WTC11 (cell line): ENCODE measurements at regions of chr19 and their contacts with region 1.

Region 1: DNA sequence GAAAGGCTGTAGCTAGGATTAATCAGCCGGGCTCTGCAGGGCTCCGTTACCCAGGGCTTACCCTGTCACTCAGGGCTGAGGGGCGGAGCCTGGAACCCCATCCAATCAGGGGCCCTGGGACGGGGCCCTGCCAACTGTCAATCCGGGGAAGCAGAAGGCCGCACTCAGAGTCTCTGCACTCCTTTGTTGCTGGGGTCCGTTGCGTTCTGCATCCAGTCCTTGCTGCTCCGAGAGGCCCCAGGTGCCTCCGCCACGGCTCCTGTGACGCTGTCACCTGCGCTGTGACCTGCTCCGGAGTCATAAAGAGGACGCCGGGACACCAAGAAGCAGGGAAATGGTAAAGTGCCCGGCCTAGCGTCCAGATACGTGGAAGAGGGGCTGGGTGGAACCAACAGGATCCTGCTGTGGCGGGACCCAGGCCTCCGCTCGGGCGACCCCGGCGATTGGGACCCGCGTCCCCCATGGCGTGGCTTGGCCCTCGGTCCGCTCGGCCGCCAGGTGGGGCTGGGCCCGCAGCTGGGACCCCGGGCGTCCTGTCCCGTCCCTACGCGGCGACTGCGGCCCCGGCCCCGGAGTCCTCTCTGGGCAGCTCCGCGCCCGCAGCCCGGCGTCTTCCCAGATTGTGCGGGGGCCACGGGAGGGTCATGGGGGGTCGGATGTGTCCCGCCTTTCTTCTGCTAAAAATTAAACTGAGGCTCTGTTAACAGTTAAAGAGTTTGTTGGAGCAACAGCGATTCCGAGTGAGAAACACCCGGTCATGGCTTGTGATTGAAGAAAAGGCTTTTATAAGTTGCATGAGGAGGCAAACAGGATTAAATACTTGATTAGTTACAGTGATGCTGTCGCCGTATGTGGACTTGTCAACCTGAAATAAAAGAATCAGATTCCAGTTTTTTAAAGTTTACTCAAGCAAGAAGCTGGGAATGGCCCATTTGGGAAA is at the start of gene ZNF491:
- DNase-seq: peak; percentile 97
- ATAC-seq: peak; percentile 98
- H3K4me3 Mint-ChIP-seq: peak within 1 kb of the TSS; percentile 84
- H3K27ac Mint-ChIP-seq: peak within 1 kb of the TSS; percentile 88
- H3K4me1 Mint-ChIP-seq: peaks cover 18% of the 10 kb centered on the region
- H3K27me3 Mint-ChIP-seq: peaks cover 46% of the 10 kb centered on the region
- CTCF ChIP-seq: no peak
- total RNA-seq, gene ZNF491: 1.1 to 2.1 TPM (median 1.3 TPM) in 3 replicates

Region 2: DNA sequence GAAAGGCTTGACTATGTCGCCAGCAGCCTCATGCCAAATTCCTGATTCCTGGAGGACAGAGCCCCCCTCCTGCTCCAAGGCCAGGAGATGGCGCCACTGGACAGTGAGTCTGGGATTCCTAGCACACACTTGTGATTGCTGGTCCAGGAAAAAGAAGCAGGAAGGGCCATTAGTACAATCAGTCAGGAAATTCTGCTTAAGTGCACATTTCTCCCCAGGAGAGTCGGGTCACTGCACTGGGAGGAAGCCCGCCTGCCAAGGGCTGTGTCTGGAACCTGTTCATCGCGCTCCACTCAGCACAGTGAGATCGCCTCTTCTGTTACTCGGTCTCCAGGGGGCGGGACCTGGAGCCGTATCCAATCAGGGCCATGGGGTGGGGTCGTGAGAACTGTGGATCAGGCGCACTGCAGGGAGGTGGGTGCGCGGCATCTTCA is 125.0 kb before region 1 on chr19:
- CTCF ChIA-PET with region 1: interaction called, 13 read pairs
- POLR2A ChIA-PET with region 1: no interaction called
- DNase-seq: peak; percentile 84
- ATAC-seq: peak; percentile 97
- H3K4me3 Mint-ChIP-seq: peak overlapping the region; percentile 88
- H3K27ac Mint-ChIP-seq: peak overlapping the region; percentile 71; the same call in 1 of the 2 replicates
- H3K4me1 Mint-ChIP-seq: peaks cover 4% of the 10 kb centered on the region; the same call in 1 of the 2 replicates
- H3K27me3 Mint-ChIP-seq: peaks cover 19% of the 10 kb centered on the region
- CTCF ChIP-seq: peak; percentile 46; the same call in 1 of the 2 replicates

Region 3: DNA sequence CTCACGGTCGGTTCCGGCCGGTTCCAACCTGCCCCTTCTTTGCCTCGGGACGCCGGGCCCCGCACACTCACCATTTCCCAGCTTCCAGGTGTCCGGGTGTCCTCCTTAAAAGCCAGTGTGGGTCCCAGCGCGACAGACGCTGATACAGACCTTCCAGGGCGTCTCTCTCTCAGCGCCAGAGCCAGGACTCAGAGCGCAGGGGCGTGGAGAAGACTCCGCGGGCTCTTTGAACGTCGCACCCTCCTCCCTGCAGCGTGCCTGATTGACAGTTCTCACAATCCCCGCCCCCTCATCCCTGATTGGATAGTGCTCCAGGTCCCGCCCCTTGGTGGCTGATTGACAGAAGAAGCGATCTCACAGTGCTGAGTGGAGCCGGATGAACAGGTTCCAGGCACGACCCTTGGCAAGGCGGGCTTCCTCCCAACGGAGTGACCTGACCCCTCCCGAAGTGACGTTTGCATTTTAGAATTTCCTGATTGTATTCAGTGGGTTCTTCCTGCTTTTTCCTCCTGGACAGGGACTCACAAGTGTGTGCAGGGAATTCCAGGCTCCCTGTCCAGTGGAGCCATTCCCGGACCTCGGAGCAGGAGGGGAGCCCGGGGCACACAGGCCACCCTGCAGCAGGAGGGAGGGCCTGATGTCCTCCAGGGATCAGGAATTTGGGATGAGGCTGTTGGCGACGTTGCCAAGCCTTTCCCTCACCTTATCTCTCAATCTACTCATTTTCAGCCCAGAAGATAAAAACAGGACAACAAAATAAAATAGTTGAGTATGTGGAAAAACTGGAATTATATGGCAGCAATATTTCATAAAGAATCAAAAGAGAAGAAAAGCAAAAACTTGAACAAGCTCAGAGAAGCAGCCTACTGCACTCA is 59.7 kb before region 1 on chr19 and contains the start of gene ZNF823:
- CTCF ChIA-PET with region 1: interaction called, 10 read pairs
- POLR2A ChIA-PET with region 1: no interaction called
- DNase-seq: peak; percentile 99
- ATAC-seq: peak; percentile 96
- H3K4me3 Mint-ChIP-seq: peak within 1 kb of the TSS; percentile 98
- H3K27ac Mint-ChIP-seq: peak within 1 kb of the TSS; percentile 96
- H3K4me1 Mint-ChIP-seq: peaks cover 10% of the 10 kb centered on the region
- H3K27me3 Mint-ChIP-seq: peaks cover 42% of the 10 kb centered on the region
- CTCF ChIP-seq: no peak
- total RNA-seq, gene ZNF823: 4.4 to 5.4 TPM (median 4.6 TPM) in 3 replicates

Region 4: GRCh38 chr19:11814029-11814699 is 15.5 kb after region 1 on chr19 and contains the start of gene ZNF440:
- CTCF ChIA-PET with region 1: interaction called, 100 read pairs
- POLR2A ChIA-PET with region 1: interaction called, 3 read pairs
- DNase-seq: peak; percentile 98
- ATAC-seq: peak; percentile 98
- H3K4me3 Mint-ChIP-seq: peak within 1 kb of the TSS; percentile 90
- H3K27ac Mint-ChIP-seq: peak within 1 kb of the TSS; percentile 72
- H3K4me1 Mint-ChIP-seq: peaks cover 18% of the 10 kb centered on the region
- H3K27me3 Mint-ChIP-seq: peaks cover 53% of the 10 kb centered on the region
- CTCF ChIP-seq: no peak
- total RNA-seq, gene ZNF440: 10.9 to 16.4 TPM (median 12.7 TPM) in 3 replicates

Region 5: DNA sequence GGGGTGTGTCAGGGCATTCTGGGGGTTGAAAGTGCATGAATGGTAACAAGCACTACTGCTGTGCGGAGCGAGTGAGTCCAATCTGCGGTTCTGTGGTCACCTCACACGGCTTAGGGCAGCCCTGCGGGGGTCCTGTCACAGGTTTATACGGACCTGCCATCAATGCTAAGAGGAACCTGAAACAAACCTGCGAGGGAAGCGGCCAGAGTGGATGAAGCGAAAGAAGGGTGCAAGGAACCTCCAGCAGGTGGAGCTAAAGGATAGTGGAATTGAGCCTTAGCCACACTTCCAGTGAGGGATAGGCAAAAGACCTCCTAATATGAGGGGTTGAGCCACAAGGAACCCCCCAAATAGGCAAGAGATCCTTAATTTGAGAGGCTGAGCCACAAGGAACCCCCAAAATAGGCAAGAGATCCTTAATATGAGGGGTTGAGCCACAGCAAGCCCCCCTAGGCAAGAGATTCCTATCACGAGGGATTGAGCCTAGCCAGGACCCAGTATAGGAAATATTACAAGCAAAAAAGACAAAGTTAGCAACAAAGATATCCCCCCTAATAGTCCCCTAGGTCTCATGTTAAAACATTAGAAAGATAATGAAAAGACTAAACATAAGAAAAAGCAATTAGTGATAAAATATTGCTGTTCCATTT is 82.6 kb after region 1 on chr19:
- CTCF ChIA-PET with region 1: interaction called, 38 read pairs
- POLR2A ChIA-PET with region 1: interaction called, 6 read pairs
- DNase-seq: peak; percentile 76
- ATAC-seq: peak; percentile 74
- H3K4me3 Mint-ChIP-seq: peak overlapping the region; percentile 13
- H3K27ac Mint-ChIP-seq: no peak overlapping the region
- H3K4me1 Mint-ChIP-seq: peaks cover 1% of the 10 kb centered on the region; the same call in 1 of the 2 replicates
- H3K27me3 Mint-ChIP-seq: peaks cover 8% of the 10 kb centered on the region
- CTCF ChIP-seq: peak; percentile 51

Region 6: DNA sequence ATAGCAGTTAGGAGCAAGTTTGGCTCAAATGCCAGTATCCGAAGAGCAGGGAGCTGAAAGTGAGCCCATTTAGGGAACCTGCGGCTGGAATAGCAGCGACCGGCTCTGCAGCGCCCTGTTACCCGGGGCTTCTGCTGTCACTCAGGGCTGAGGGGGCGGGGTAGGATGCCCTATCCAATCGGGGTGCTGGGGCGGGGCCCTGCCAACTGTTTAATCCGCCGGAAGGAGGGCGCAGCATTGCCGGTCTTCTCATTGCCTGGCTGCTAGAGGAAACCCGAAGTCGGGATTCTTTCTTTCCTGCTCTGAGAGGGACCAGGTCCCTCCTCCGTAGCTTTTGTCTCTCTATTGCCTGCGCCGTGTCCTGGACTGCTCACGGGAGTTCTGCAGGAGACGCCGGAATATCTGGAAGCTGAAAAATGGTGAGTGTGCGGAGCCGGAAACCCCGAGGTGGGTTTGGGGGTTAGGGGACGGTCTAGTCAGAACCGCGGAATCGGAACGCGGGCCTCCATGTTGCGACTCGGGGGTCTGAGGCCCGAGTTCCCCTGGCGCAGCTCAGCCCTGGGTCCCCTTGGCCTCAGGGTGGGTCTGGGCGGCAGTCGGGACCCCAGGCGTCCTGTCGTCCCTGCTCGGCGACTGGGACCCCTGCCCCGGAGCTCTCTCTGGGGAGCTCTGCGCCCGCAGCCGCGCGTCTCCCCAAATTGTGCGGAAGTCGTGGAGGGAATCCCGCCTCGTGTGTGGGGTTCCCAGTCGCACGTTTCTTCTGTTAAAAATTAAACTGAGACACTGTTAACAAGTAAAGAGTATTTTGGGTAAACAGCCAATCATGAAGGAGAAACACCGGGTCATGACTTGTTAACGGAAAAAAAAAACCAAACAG is 189.0 kb after region 1 on chr19:
- CTCF ChIA-PET with region 1: interaction called, 16 read pairs
- POLR2A ChIA-PET with region 1: no interaction called
- DNase-seq: peak; percentile 98
- ATAC-seq: peak; percentile 97
- H3K4me3 Mint-ChIP-seq: peak overlapping the region; percentile 98
- H3K27ac Mint-ChIP-seq: peak overlapping the region; percentile 99
- H3K4me1 Mint-ChIP-seq: peaks cover 31% of the 10 kb centered on the region
- H3K27me3 Mint-ChIP-seq: no peaks in the 10 kb centered on the region
- CTCF ChIP-seq: no peak

Region 7: DNA sequence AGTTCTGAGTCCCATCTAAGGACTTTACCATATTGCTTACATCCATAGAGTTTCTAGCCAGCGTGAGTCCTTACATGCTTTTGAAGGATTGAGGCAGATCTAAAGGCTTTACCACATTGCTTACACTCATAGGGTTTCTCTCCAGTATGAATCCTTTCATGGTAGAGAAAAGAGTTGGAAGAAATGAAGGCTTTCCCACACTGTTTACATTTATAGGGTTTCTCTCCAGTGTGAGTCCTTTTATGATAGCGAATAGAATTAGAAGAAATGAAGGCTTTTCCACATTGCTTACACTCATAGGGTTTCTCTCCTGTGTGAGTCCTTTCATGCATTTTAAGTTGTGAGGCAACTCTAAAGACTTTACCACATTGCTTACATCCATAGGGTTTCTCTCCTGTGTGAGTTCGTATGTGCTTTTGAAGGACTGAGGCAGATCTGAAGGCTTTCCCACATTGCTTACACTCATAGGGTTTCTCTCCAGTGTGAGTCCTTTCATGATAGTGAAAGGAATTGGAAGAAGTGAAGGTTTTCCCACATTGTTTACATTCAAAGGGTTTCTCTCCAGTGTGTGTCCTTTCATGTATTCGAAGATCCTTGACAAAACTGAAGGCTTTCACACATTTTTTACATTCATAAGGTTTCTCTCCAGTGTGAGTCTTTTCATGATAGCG is 245.2 kb after region 1 on chr19:
- CTCF ChIA-PET with region 1: no interaction called
- POLR2A ChIA-PET with region 1: no interaction called
- DNase-seq: no peak
- ATAC-seq: no peak
- H3K4me3 Mint-ChIP-seq: no peak overlapping the region
- H3K27ac Mint-ChIP-seq: no peak overlapping the region
- H3K4me1 Mint-ChIP-seq: no peaks in the 10 kb centered on the region
- H3K27me3 Mint-ChIP-seq: peaks cover 9% of the 10 kb centered on the region
- CTCF ChIP-seq: no peak